Activated B cell treated with CpG ODN at 0.5 μM for 24 hours (primary cell): ENCODE measurements at regions of chr17 and their contacts with region 1.

Region 1: DNA sequence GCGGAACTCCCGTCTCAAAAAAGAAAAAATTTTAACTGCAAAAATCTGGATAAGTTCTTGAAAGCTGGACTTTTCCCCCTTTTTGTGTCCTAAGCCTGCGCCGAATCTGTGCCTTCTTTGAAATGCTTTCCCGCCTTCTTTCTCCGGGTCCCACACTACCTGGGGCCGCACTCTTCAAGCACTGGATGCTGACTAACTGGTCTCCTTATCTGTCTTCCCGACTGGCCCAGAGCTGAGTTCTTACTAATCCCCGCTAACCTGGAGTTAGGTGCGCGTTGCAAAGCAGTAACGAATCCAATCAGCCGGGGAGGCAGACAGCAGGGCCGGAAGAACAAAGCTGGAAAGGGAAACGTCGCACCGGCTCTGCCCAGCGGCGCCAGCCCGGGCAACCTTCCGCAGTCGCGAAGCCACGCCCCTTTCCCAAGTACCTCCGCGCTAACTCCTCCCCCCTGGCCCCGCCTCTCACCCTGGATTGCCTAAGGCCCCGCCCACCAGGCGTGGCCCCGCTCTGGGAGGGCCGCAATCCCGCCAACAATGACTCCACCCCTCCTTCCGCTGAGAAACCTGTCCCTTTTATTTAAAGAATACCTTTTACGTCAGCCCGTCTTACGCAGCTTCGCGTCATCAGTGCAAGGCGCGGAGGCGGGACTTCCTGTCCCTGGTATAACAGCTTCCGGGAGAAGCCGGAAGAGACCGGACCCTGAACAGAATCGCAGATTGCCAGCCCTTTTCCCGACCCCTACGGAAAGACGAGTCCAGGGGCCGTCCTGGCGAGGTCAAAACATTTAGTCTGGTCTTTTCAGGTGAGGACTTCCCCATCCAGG is at the start of gene TMUB2:
- DNase-seq: peak; percentile 99
- ATAC-seq: peak; percentile 96
- H3K4me3 Mint-ChIP-seq: peak within 1 kb of the TSS; percentile 99
- H3K27ac Mint-ChIP-seq: peak within 1 kb of the TSS; percentile 99
- H3K4me1 Mint-ChIP-seq: peaks cover 46% of the 10 kb centered on the region
- H3K27me3 Mint-ChIP-seq: no peaks in the 10 kb centered on the region
- CTCF ChIP-seq: no peak
- total RNA-seq, gene TMUB2: 32.3 and 36.0 TPM in 2 replicates

Region 2: GRCh38 chr17:42819944-42820535 is 1366.5 kb before region 1 on chr17:
- CTCF ChIA-PET with region 1: no interaction called
- POLR2A ChIA-PET with region 1: interaction called, 10 read pairs
- intact Hi-C with region 1: no loop called
- DNase-seq: peak; percentile 43
- ATAC-seq: peak; percentile 20
- H3K4me3 Mint-ChIP-seq: peak overlapping the region; percentile 28
- H3K27ac Mint-ChIP-seq: no peak overlapping the region
- H3K4me1 Mint-ChIP-seq: peaks cover 21% of the 10 kb centered on the region
- H3K27me3 Mint-ChIP-seq: no peaks in the 10 kb centered on the region
- CTCF ChIP-seq: no peak

Region 3: DNA sequence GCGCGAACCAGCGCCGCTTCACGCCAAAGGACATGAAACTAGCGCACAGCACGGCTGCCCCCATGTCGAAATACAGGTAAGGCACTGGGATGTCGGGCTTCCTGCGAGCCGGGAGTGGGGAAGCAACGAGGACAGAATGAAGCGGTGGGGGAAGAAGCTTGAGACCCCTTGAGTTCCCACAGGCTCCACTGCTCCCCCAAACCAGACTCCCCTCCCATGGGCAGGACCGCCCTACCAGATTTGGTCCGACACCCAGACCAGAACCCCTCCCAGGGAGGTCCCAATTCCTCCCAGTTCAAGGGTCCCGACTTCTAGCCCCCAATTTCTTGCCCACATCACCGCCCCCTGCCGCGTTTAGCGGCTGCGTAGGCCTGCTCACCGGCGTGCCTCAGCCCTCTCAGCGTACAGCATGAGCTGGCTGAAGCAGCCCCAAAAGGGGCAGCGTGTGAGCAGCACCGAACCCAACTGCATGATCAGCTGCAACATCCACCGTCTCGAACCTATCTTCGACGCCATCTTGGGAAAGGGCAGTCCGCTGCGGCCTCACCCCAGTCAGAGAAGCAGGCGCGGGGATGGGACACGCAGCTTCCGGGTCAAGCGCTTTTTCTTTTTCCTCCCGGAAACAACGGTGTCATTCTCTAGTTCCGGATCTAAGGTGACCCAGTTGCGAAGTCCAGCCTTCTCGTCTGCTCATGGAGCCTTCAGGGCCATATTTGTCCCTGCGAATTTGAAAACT is 171.9 kb before region 1 on chr17 and contains the start of gene TMEM101:
- CTCF ChIA-PET with region 1: no interaction called
- POLR2A ChIA-PET with region 1: no interaction called
- intact Hi-C with region 1: loop called (anchors 2 kb)
- DNase-seq: peak; percentile 67
- ATAC-seq: peak; percentile 98
- H3K4me3 Mint-ChIP-seq: peak within 1 kb of the TSS; percentile 100
- H3K27ac Mint-ChIP-seq: peak within 1 kb of the TSS; percentile 91
- H3K4me1 Mint-ChIP-seq: peaks cover 14% of the 10 kb centered on the region
- H3K27me3 Mint-ChIP-seq: no peaks in the 10 kb centered on the region
- CTCF ChIP-seq: no peak
- total RNA-seq, gene TMEM101: 23.0 and 24.6 TPM in 2 replicates

Region 4: DNA sequence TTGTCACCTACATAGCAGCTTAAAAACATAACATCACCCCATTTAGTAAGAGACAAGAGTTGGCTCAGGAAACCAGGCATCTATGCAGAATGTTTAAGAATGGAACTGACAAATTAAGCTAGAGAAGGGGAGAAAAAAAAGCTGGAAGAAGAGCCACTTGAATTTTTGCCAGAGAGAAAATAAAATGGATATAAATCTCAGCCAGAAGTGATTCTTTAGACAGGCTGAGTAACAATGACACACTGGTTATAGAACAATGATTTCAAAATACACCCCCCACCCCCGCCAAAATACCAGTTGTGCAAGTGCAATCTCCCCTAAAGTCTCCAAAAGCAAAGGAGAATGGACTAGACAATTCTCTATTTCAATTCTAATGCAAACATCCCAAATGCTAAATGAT is 142.5 kb before region 1 on chr17:
- CTCF ChIA-PET with region 1: no interaction called
- POLR2A ChIA-PET with region 1: no interaction called
- intact Hi-C with region 1: no loop called
- DNase-seq: no peak
- ATAC-seq: no peak
- H3K4me3 Mint-ChIP-seq: no peak overlapping the region
- H3K27ac Mint-ChIP-seq: no peak overlapping the region
- H3K4me1 Mint-ChIP-seq: peaks cover 6% of the 10 kb centered on the region
- H3K27me3 Mint-ChIP-seq: no peaks in the 10 kb centered on the region
- CTCF ChIP-seq: no peak

Region 5: GRCh38 chr17:44123356-44124117 is 63.0 kb before region 1 on chr17 and contains the start of gene HDAC5:
- CTCF ChIA-PET with region 1: no interaction called
- POLR2A ChIA-PET with region 1: interaction called, 24 read pairs
- intact Hi-C with region 1: loop called (anchors 1 kb)
- DNase-seq: peak; percentile 95
- ATAC-seq: peak; percentile 96
- H3K4me3 Mint-ChIP-seq: peak within 1 kb of the TSS; percentile 95
- H3K27ac Mint-ChIP-seq: peak within 1 kb of the TSS; percentile 97
- H3K4me1 Mint-ChIP-seq: peaks cover 49% of the 10 kb centered on the region
- H3K27me3 Mint-ChIP-seq: no peaks in the 10 kb centered on the region
- CTCF ChIP-seq: no peak
- total RNA-seq, gene HDAC5: 28.4 and 35.1 TPM in 2 replicates

Region 6: GRCh38 chr17:44199553-44200477 is 13.3 kb after region 1 on chr17 and contains the start of gene ATXN7L3:
- CTCF ChIA-PET with region 1: interaction called, 5 read pairs
- POLR2A ChIA-PET with region 1: interaction called, 94 read pairs
- intact Hi-C with region 1: loop called (anchors 1 kb)
- DNase-seq: peak; percentile 95
- ATAC-seq: peak; percentile 85
- H3K4me3 Mint-ChIP-seq: peak within 1 kb of the TSS; percentile 91
- H3K27ac Mint-ChIP-seq: peak within 1 kb of the TSS; percentile 92
- H3K4me1 Mint-ChIP-seq: peaks cover 39% of the 10 kb centered on the region
- H3K27me3 Mint-ChIP-seq: no peaks in the 10 kb centered on the region
- CTCF ChIP-seq: no peak
- total RNA-seq, gene ATXN7L3: 92.0 and 103 TPM in 2 replicates

Region 7: DNA sequence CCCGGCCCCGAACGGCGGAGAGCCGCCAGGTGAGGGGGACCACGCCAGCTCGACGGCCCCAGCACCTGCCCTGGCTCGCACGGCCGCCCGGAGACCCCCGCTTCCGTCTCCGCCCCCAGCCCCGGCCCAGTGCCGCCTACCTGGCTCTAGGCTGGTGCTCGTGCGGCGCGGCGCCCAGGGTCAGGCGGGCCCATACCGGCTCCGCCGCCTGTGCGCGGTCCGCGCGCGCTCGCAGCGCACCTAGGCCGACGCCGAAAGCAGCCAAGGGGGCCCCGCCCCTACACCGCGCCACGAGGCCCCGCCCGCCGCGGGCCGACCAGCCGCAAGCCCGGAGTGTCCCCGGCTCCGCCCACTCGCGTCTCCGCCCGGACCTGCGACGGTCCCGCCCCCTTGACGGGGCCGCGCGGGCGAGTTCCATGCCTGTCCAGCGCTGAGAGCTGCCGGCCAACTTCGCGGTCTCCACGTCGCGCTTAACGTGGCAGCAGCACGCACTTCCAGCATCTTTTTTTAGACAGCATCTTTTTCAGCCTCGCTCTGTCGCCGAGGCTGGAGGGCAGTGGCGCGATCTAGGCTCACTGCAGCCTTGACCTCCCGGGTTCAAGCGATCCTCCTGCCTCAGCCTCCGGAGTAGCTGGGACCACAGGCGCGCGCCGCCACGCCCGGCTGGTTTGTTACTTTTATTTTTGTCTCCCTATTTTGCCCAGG is 138.2 kb after region 1 on chr17 and contains the start of gene SLC25A39:
- CTCF ChIA-PET with region 1: interaction called, 3 read pairs
- POLR2A ChIA-PET with region 1: interaction called, 10 read pairs
- intact Hi-C with region 1: loop called (anchors 1 kb)
- DNase-seq: peak; percentile 99
- ATAC-seq: peak; percentile 74
- H3K4me3 Mint-ChIP-seq: peak within 1 kb of the TSS; percentile 91
- H3K27ac Mint-ChIP-seq: peak within 1 kb of the TSS; percentile 96
- H3K4me1 Mint-ChIP-seq: peaks cover 33% of the 10 kb centered on the region
- H3K27me3 Mint-ChIP-seq: no peaks in the 10 kb centered on the region
- CTCF ChIP-seq: no peak
- total RNA-seq, gene SLC25A39: 119 and 129 TPM in 2 replicates

Region 8: DNA sequence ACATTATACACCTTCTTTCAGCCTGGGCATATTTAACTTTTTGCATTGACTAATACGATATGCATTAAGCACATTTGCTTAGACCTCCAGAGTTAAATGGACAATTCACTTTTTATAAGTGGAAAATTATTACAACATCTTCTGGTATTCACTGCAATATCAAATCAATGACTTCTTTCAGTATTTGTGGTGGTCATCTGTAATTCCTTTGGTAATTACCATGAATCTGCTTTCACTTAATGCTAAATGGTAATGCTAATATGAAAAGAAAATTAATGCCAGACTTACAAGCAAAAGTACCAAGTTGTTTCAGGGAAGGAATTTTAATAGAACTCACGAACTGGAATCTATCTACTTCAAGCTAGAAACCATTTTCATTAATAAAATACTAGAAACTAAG is 310.3 kb after region 1 on chr17:
- CTCF ChIA-PET with region 1: no interaction called
- POLR2A ChIA-PET with region 1: no interaction called
- intact Hi-C with region 1: no loop called
- DNase-seq: no peak
- ATAC-seq: no peak
- H3K4me3 Mint-ChIP-seq: no peak overlapping the region
- H3K27ac Mint-ChIP-seq: no peak overlapping the region
- H3K4me1 Mint-ChIP-seq: peaks cover 71% of the 10 kb centered on the region
- H3K27me3 Mint-ChIP-seq: no peaks in the 10 kb centered on the region
- CTCF ChIP-seq: no peak

Region 9: GRCh38 chr17:44899069-44899782 is 712.7 kb after region 1 on chr17 and contains the start of gene EFTUD2:
- CTCF ChIA-PET with region 1: no interaction called
- POLR2A ChIA-PET with region 1: no interaction called
- intact Hi-C with region 1: loop called (anchors 2 kb)
- DNase-seq: peak; percentile 94
- ATAC-seq: peak; percentile 93
- H3K4me3 Mint-ChIP-seq: peak within 1 kb of the TSS; percentile 96
- H3K27ac Mint-ChIP-seq: peak within 1 kb of the TSS; percentile 99
- H3K4me1 Mint-ChIP-seq: peaks cover 31% of the 10 kb centered on the region
- H3K27me3 Mint-ChIP-seq: peaks cover 4% of the 10 kb centered on the region
- CTCF ChIP-seq: no peak
- total RNA-seq, gene EFTUD2: 168 and 192 TPM in 2 replicates